Sigmoid colon (tissue), 7 donors: ENCODE measurements at regions of chr1 and their contacts with region 1.

Region 1: DNA sequence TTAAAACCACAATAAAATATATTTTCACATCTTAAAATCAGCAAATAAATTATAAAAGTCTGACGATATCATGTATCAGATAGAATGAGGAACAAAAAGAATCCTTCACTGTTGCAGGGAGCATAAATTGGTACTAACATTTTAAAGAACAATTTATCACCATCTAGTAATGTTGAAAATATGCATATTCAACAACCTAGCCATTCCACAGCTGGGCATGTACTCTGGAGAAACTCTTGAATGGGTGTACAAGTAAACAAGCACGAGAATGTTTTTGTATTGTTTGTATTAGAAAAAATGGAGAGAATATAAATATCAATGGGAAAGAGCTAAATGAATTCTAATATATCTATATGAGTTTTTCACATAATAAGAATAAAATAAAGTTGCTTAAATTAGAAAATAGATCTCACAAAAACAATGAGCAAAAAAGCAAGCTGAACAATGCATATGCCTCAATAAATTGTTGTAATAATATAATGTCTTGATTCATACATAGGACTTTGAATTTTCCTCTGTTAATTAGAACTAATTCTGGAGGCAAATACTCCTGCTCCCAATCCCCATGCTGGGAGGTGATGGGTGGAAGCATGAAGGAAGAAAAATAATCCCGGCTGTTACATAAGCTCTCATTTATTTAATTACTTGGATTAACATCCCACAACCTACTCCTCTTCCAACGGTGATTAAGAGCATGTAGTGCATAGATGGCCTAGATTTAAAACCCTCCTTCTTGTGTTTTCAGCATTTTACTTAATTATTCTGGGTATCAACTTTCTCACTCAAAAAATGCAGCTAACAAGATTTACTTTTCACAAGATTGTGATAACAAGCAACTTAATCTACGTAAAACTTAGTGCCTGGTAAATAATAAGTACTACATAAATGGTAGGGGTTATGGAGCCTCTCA is 5.5 kb upstream of the FMO2 start:
- DNase-seq: no peak
- H3K4me3 ChIP-seq: no peak overlapping the region
- H3K27ac ChIP-seq: no peak overlapping the region
- H3K4me1 ChIP-seq: peaks cover 0 to 3% (median 0%) of the 10 kb centered on the region in 4 donors
- H3K27me3 ChIP-seq: no peaks in the 10 kb centered on the region
- CTCF ChIP-seq: no peak
- EP300 ChIP-seq: no peak
- POLR2A ChIP-seq: no peak

Region 2: DNA sequence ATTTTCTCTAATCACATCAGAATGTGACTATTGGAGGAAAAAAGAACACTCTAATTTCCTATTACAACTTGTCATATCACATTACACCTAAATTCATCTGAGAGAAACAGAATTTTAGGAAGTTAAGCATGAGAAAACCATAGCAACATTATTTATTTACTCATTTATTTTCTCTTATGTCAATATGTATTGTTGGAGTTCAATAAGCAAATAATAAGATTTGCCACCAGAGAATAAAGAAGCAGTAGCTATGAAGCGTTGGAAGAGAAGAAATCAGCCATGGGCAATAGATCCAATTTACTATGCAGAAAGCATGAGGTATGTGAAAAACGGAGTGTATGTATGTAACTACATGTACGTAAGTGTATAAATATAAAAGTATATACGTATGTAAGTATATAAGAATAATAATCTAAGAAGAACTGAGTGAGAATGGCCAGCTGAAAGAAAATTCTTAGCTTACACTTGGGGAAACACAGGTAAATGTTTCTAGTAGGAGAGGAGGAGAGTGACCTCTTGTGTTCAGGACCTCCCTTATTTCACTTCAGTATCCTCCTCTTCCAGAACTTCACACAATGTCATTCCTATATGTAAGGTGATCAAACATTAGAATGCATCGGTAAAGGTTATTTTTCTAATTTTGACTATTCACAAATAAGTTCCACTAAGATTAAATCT is 251.8 kb before region 1 on chr1:
- intact Hi-C with region 1: no loop called
- DNase-seq: no peak
- H3K4me3 ChIP-seq: no peak overlapping the region
- H3K27ac ChIP-seq: no peak overlapping the region
- H3K4me1 ChIP-seq: peaks cover 0 to 14% (median 7%) of the 10 kb centered on the region in 4 donors
- H3K27me3 ChIP-seq: no peaks in the 10 kb centered on the region
- CTCF ChIP-seq: no peak
- EP300 ChIP-seq: no peak
- POLR2A ChIP-seq: no peak

Region 3: GRCh38 chr1:171075041-171075440 is 104.5 kb before region 1 on chr1:
- intact Hi-C with region 1: loop called (anchors 5 kb)
- DNase-seq: no peak
- H3K4me3 ChIP-seq: no peak overlapping the region
- H3K27ac ChIP-seq: no peak overlapping the region
- H3K4me1 ChIP-seq: no peaks in the 10 kb centered on the region
- H3K27me3 ChIP-seq: no peaks in the 10 kb centered on the region
- CTCF ChIP-seq: no peak
- EP300 ChIP-seq: no peak
- POLR2A ChIP-seq: no peak

Region 4: DNA sequence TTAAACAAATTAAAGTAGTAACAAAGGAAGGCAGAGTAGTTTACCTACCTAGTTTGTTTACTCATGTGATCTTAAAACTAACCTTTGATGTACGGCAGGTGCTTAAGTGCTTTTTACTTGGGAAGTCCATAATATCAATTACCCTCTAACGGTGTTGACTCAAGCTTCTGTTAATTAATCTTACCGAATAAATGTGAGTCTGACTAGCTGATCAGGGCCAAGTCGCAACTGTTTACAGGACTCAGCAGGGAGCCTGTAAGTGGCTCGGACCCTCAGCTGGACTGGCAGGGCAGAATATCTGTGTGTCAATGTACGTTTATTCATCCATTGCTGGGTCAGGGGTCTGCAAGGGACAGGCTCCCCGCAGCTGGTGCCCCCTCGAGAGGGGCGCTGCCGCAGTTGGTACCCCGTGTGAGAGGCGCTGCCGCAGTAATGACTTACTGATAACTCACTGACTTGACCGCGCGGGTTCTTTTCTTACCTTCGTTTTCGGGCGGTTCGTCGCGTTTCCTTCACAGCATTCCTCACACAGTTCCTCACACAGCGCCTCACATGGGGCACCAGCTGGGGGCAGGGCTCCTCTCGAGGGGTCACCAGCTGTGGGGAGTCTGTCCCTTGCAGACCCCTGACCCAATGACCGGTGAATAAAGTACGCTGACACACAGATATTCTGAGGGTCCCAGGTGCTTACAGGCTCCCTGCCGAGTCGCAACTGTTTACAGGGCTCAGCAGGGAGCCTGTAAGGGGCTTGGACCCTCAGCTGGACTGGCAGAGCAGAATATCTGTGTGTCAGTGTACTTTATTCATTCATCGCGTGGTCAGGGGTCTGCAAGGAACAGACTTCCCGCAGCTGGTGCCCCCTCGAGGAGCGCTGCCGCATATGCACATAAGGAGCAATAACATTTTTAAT is 71.7 kb after region 1 on chr1:
- intact Hi-C with region 1: no loop called
- DNase-seq: no peak
- H3K4me3 ChIP-seq: peak overlapping the region; percentile 19 to 49 (median 41)
- H3K27ac ChIP-seq: no peak overlapping the region
- H3K4me1 ChIP-seq: peaks cover 0 to 8% (median 0%) of the 10 kb centered on the region in 4 donors
- H3K27me3 ChIP-seq: peaks cover 0 to 29% (median 26%) of the 10 kb centered on the region in 3 donors
- CTCF ChIP-seq: no peak
- EP300 ChIP-seq: no peak
- POLR2A ChIP-seq: no peak

Region 5: DNA sequence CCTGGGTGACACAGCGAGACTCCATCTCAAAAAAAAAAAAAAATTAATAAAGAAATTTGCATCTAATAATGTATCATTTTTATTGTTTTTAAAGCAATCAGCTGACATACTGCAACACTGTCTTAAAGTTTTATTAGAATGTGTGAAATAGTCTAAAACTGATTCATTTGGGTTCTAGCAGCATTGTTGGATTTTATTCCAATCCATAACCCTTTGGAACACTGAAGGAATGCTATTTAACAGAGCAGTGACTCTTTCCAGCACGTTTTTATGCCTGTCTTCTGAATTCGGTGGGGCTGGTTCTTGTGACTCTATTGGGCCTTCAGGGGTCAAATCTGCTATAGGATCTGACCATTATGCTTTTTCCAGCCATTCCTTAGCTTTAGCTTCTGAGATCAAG is 116.2 kb after region 1 on chr1:
- intact Hi-C with region 1: no loop called
- DNase-seq: no peak
- H3K4me3 ChIP-seq: no peak overlapping the region
- H3K27ac ChIP-seq: no peak overlapping the region
- H3K4me1 ChIP-seq: no peaks in the 10 kb centered on the region
- H3K27me3 ChIP-seq: no peaks in the 10 kb centered on the region
- CTCF ChIP-seq: no peak
- EP300 ChIP-seq: no peak
- POLR2A ChIP-seq: no peak